Mammary epithelial cell (primary cell): ENCODE measurements at regions of chr12 and their contacts with region 1.

Region 1: DNA sequence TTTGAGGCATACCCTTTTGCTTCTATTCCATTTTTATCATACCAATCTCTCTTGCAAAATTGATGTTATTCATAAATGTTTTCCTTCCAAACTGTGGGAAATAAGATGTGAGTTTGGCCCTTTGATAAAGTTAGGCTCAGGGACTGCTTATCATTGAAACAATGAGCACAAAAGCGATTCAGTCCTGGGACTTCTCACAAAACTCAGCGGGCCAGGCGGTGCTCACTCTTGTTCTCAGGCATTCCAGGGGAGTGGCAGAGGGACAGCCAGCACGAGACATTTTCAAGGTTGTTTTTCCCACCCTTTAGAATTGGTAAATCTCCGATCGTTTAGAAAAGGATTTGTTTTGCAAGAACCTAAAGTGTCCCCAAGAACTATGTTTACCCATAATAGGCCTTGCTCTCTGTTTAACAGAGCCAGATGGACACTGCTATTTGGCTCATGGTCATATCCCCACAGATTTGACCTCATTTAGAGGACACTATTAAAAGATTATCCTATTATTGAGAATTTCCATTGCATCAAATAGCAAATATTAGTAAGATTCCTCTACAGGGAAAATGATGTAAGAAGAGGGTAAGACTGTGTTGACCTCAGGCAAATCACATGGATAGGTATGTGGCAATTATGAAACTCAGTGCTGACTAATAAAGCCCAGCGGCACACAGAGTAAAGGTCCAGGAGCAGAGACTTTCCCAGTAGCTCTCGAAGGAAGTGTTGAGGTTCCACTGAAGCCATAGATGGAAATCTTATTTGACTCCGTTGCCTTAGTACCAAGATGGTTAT is 102.7 kb upstream of the USP44 start:
- DNase-seq: peak; percentile 93
- H3K4me3 ChIP-seq: no peak overlapping the region
- H3K27ac ChIP-seq: peak overlapping the region; percentile 80
- H3K4me1 ChIP-seq: peaks cover 22% of the 10 kb centered on the region
- H3K27me3 ChIP-seq: no peaks in the 10 kb centered on the region
- CTCF ChIP-seq: no peak

Region 2: DNA sequence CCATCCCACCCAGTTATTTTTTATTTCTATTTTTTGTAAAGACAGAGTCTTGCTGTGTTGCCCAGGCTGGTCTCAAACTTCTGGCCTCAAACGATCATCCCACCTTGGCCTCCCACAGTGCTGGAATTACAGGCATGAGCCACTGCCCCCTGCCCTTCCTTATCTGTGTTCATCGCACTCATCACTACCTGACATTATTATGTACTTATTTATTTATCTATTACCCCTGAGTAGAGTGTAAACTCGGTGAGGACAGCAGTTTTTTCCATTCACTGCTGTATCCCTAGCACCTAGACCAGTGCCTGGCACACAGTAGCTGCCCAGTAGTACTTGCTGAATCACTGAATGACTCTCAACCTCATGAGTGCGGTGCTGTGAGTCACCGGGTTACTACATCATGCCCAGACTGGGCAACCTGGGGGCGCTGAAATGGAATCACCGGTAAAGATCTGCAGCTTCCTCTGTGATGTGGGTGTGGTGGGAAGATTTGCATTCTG is 20.9 kb before region 1 on chr12:
- CTCF ChIA-PET with region 1: no interaction called
- dilution Hi-C with region 1: no loop called
- in situ Hi-C with region 1: no loop called
- intact Hi-C with region 1: loop called (anchors 1 kb)
- DNase-seq: peak; percentile 99
- H3K4me3 ChIP-seq: no peak overlapping the region
- H3K27ac ChIP-seq: peak overlapping the region; percentile 94
- H3K4me1 ChIP-seq: peaks cover 22% of the 10 kb centered on the region
- H3K27me3 ChIP-seq: no peaks in the 10 kb centered on the region
- CTCF ChIP-seq: peak in 1 of 2 donors; percentile 12

Region 3: GRCh38 chr12:95790033-95790911 is 136.3 kb after region 1 on chr12 and contains the start of gene NTN4:
- CTCF ChIA-PET with region 1: no interaction called
- dilution Hi-C with region 1: no loop called
- in situ Hi-C with region 1: no loop called
- intact Hi-C with region 1: loop called (anchors 1 kb)
- DNase-seq: peak; percentile 54
- H3K4me3 ChIP-seq: peak within 1 kb of the TSS; percentile 73 to 79 (median 78)
- H3K27ac ChIP-seq: peak within 1 kb of the TSS; percentile 58
- H3K4me1 ChIP-seq: peaks cover 29% of the 10 kb centered on the region
- H3K27me3 ChIP-seq: no peaks in the 10 kb centered on the region
- CTCF ChIP-seq: no peak
- total RNA-seq, gene NTN4: 38.6 to 47.2 TPM